ENCODE measurements at regions of chr19 and their contacts with region 1.

Region 1: GRCh38 chr19:16185123-16185767 is at the start of gene FAM32A:
- DNase-seq: peak; percentile 98
- ATAC-seq: peak; percentile 88
- H3K4me3 ChIP-seq: peak within 1 kb of the TSS; percentile 94 to 97
- H3K27ac ChIP-seq: peak within 1 kb of the TSS; percentile 54
- H3K4me1 ChIP-seq: peaks cover 21 to 41% of the 10 kb centered on the region in 2 experiments
- H3K27me3 ChIP-seq: no peaks in the 10 kb centered on the region
- CTCF ChIP-seq: 0 out of 6 replicates have a peak, but pooled peaks of 1 of the 3 experiments have one; percentile 12
- POLR2A ChIP-seq: peak; percentile 61
- RAD21 ChIP-seq: no peak
- total RNA-seq, gene FAM32A: 61.3 TPM

Region 2: GRCh38 chr19:15810335-15810734 is 374.9 kb before region 1 on chr19:
- CTCF ChIA-PET with region 1: interaction called, 3 read pairs
- POLR2A ChIA-PET with region 1: interaction called, 3 read pairs
- RAD21 ChIA-PET with region 1: no interaction called
- intact Hi-C with region 1: loop called (anchors 1 kb)
- DNase-seq: no peak
- ATAC-seq: peak; percentile 60
- H3K4me3 ChIP-seq: no peak overlapping the region
- H3K27ac ChIP-seq: no peak overlapping the region
- H3K4me1 ChIP-seq: peaks cover 27 to 44% of the 10 kb centered on the region in 2 experiments
- H3K27me3 ChIP-seq: no peaks in the 10 kb centered on the region
- CTCF ChIP-seq: peak; percentile 63 to 79 (median 67); a peak in 5 of 6 replicates
- POLR2A ChIP-seq: no peak
- RAD21 ChIP-seq: peak; percentile 79

Region 3: DNA sequence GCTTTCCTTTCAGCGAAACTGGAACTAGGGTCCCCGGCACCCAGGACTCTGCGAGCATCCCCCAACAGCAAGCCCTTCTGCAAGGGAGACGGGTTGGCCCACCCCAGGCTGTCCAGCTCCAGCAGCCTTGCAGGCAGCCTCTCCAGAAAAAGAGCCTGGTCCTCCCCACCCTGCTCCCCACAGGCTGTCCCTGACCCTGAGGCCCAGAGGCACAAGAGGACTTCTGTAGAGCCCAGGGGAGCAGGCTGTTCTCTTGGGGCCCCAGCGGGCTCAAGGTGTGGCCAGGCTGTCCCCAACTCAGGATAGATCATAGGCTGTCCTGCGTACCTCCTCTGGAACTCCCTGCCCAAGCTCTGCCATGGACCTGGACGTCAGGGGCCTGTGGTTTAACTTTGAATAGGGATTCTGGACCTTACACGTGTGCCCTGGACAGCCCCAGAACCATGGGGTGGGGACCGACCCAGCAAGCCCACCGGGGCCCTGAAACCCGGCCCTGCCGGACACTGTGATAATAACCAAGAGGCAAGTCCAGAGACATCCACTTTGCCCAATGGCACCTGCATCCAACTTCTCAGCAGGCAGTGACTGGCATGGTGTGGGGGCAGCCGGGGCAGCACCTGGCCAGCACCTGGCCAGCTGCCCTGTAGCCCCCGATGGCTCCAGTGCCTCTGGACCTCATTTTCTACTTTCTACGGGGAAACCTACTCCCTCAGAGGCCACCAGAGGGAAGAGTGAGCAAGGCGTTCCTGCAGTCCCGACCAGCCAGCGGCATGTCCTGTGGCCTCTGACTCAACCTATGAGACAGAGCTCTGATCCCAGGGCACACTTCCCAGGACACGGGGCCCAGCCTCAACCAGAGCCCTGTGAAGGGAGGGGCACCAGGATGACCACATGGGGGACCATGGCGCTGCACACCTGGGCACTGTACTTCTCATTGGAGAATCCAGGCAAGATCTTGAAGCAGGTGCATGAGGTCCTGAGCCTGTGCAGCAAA is 159.8 kb before region 1 on chr19:
- CTCF ChIA-PET with region 1: interaction called, 3 read pairs
- POLR2A ChIA-PET with region 1: interaction called, 6 read pairs
- RAD21 ChIA-PET with region 1: no interaction called
- intact Hi-C with region 1: loop called (anchors 1 kb)
- DNase-seq: peak; percentile 56
- ATAC-seq: peak; percentile 99
- H3K4me3 ChIP-seq: no peak overlapping the region
- H3K27ac ChIP-seq: no peak overlapping the region
- H3K4me1 ChIP-seq: peaks cover 0 to 11% of the 10 kb centered on the region in 2 experiments; a peak in 2 of 4 replicates
- H3K27me3 ChIP-seq: no peaks in the 10 kb centered on the region
- CTCF ChIP-seq: peak; percentile 56 to 81 (median 63); a peak in 5 of 6 replicates
- POLR2A ChIP-seq: no peak
- RAD21 ChIP-seq: peak; percentile 75

Region 4: GRCh38 chr19:16062789-16063188 is 122.5 kb before region 1 on chr19:
- CTCF ChIA-PET with region 1: no interaction called
- POLR2A ChIA-PET with region 1: no interaction called
- RAD21 ChIA-PET with region 1: interaction called in 1 of 2 experiments, 3 read pairs
- intact Hi-C with region 1: loop called (anchors 2 kb)
- DNase-seq: no peak
- ATAC-seq: no peak; the same call in 1 of the 2 replicates
- H3K4me3 ChIP-seq: no peak overlapping the region
- H3K27ac ChIP-seq: no peak overlapping the region
- H3K4me1 ChIP-seq: peaks cover 0 to 34% of the 10 kb centered on the region in 2 experiments; a peak in 3 of 4 replicates
- H3K27me3 ChIP-seq: no peaks in the 10 kb centered on the region
- CTCF ChIP-seq: peak in 2 of 3 experiments; percentile 94 to 98; a peak in 4 of 6 replicates
- POLR2A ChIP-seq: no peak
- RAD21 ChIP-seq: no peak

Region 5: GRCh38 chr19:16125737-16126495 is 59.3 kb before region 1 on chr19:
- CTCF ChIA-PET with region 1: no interaction called
- POLR2A ChIA-PET with region 1: no interaction called
- RAD21 ChIA-PET with region 1: no interaction called
- intact Hi-C with region 1: no loop called
- DNase-seq: no peak
- ATAC-seq: no peak
- H3K4me3 ChIP-seq: no peak overlapping the region
- H3K27ac ChIP-seq: no peak overlapping the region
- H3K4me1 ChIP-seq: no peaks in the 10 kb centered on the region
- H3K27me3 ChIP-seq: no peaks in the 10 kb centered on the region
- CTCF ChIP-seq: no peak
- POLR2A ChIP-seq: no peak
- RAD21 ChIP-seq: no peak

Region 6: DNA sequence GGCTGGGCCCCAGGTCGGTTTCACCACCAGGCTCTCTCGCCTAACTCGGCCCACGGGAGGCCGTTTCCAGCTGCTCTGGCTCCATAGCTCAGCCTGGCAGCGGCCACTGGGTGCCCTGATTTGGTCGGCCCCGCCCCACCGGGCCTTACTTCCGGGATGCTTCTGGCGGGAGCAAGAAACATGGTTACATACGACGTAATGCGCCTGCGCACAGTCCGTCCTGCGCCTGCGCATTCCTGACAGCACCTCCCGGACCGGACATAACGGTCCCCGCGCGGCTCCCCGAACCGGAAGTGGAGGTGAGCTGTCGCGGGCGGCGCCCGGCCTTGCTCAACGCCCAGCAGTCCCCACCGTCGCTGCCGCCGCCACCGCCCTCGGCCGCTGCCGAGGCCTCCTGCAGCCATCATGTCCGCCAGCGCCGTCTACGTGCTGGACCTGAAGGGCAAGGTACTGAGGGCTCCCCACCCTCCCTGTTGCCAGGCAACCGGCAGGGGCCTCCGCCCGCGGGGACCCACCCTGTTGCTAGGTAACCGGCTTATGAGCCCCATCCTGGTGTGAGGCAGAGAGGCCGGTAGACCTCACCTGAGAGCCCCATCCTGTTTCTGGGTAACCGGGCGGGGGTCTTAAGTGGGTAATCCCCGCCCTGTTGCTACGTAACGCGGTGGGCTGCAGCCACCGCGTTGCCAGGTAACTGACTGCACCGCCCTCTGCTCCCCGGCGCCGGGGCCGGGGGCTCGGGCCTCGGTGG is 12.6 kb after region 1 on chr19 and contains the start of gene AP1M1:
- CTCF ChIA-PET with region 1: interaction called, 14 read pairs
- POLR2A ChIA-PET with region 1: interaction called, 18 read pairs
- RAD21 ChIA-PET with region 1: no interaction called
- intact Hi-C with region 1: no loop called
- DNase-seq: peak; percentile 96
- ATAC-seq: peak; percentile 92
- H3K4me3 ChIP-seq: peak within 1 kb of the TSS; percentile 96 to 98
- H3K27ac ChIP-seq: peak within 1 kb of the TSS; percentile 76
- H3K4me1 ChIP-seq: peaks cover 15 to 43% of the 10 kb centered on the region in 2 experiments
- H3K27me3 ChIP-seq: no peaks in the 10 kb centered on the region
- CTCF ChIP-seq: no peak
- POLR2A ChIP-seq: no peak
- RAD21 ChIP-seq: no peak
- total RNA-seq, gene AP1M1: 50.0 TPM

Measured in HCT116 (cell line).